Left colon (tissue), 2 donors: ENCODE measurements at regions of chr5 and their contacts with region 1.

Region 1: DNA sequence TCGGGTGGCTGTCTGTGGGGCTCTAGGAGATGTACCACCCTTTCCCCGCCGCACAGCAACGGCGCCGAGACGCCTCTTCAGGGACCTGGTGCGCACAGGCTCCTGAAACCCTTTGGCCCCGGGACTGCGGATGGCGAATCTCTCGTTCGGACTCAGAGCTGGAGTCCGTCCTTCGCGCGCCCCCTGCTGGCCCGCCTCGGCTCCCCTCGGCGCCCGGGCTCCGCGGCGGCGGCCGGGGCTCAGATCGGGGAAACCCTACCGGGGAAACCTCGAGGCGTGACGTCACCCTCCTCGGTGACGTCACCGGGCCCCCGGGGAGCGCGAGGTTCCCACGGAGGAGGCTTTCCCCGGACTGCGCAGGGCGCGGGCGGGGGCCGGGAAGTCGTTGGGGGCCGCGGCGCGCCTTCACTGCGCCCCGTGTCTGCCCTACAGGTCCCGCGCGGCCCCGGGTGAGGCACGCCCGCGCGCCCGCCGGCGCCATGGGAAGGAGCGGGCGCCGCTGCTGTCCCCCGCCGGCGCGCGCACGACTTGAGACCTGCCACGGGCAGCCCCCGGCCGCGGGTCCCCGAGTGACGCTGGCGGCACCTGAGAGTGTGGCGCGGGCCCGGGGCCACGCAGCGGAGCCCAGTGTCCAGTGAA is 7.9 kb downstream of the PRR7 start:
- DNase-seq: peak; percentile 88 to 97
- ATAC-seq: peak; percentile 63

Region 2: GRCh38 chr5:176660860-176661641 is 793.5 kb before region 1 on chr5:
- intact Hi-C with region 1: no loop called
- DNase-seq: peak; percentile 52 to 78
- ATAC-seq: peak; percentile 68

Region 3: GRCh38 chr5:177317959-177318377 is 136.5 kb before region 1 on chr5:
- intact Hi-C with region 1: loop called in 1 of 2 experiments (anchors 5 kb)
- DNase-seq: peak; percentile 74 to 85
- ATAC-seq: peak; percentile 69

Region 4: GRCh38 chr5:177390363-177391300 is 63.9 kb before region 1 on chr5:
- intact Hi-C with region 1: loop called in 1 of 2 experiments (anchors 5 kb)
- DNase-seq: peak; percentile 77 to 88
- ATAC-seq: peak; percentile 91

Region 5: GRCh38 chr5:177403792-177404640 is 50.5 kb before region 1 on chr5:
- intact Hi-C with region 1: loop called in 1 of 2 experiments (anchors 5 kb)
- DNase-seq: peak; percentile 88 to 90
- ATAC-seq: peak; percentile 73